ENCODE measurements at regions of chr4 and their contacts with region 1.

Region 1: GRCh38 chr4:152454398-152455011 is 81.4 kb downstream of the FBXW7 start:
- DNase-seq: peak; percentile 27 to 52 (median 51)
- H3K4me3 ChIP-seq: no peak overlapping the region
- H3K27ac ChIP-seq: no peak overlapping the region
- H3K4me1 ChIP-seq: peaks cover 4 to 14% (median 10%) of the 10 kb centered on the region in 4 experiments
- H3K27me3 ChIP-seq: no peaks in the 10 kb centered on the region

Region 2: DNA sequence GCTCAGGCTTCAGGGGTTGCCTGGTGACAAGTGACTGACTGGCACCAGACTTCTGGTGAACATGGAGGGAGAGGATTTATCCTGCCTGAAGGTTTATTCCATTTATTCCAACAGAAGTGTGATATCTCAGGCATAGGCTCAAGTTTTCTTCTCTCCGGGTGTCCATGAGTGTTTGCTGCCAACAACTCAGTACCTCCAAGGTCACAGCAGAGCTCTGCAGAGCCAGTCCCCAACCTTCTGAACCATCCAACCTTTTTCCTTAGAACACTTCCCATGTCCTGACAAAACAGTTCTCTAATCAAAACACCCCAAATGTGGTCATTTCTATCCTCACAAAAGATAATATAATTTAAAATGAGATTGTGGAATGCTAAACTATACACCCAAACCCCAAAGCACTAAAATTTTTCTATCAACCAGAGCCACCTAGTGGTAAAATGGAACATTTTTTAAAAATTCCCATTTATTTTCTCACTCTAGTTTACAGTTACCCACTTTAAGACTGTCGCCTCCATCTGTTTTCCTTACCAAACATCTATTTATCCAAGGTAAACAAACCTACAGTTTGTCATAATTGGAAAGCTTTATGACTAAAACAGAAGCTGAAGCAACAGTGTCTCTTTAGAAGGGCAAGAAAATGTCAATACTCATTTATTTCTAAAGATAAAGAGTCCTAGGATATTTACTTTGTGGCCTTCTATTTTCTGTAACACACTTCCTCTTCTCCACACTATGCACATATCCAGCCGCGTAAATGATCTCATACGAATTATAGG is 185.7 kb after region 1 on chr4:
- CTCF ChIA-PET with region 1: interaction called, 31 read pairs
- POLR2A ChIA-PET with region 1: interaction called, 4 read pairs
- DNase-seq: peak in 2 of 3 donors; percentile 14 to 26
- H3K4me3 ChIP-seq: no peak overlapping the region
- H3K27ac ChIP-seq: no peak overlapping the region
- H3K4me1 ChIP-seq: peaks cover 0 to 13% (median 5%) of the 10 kb centered on the region in 4 experiments
- H3K27me3 ChIP-seq: no peaks in the 10 kb centered on the region

Region 3: GRCh38 chr4:152735396-152735859 is 280.9 kb after region 1 on chr4:
- CTCF ChIA-PET with region 1: interaction called, 16 read pairs
- POLR2A ChIA-PET with region 1: no interaction called
- DNase-seq: peak; percentile 15 to 48 (median 32)
- H3K4me3 ChIP-seq: no peak overlapping the region
- H3K27ac ChIP-seq: no peak overlapping the region
- H3K4me1 ChIP-seq: peaks cover 0 to 3% (median 0%) of the 10 kb centered on the region in 4 experiments
- H3K27me3 ChIP-seq: no peaks in the 10 kb centered on the region

Region 4: DNA sequence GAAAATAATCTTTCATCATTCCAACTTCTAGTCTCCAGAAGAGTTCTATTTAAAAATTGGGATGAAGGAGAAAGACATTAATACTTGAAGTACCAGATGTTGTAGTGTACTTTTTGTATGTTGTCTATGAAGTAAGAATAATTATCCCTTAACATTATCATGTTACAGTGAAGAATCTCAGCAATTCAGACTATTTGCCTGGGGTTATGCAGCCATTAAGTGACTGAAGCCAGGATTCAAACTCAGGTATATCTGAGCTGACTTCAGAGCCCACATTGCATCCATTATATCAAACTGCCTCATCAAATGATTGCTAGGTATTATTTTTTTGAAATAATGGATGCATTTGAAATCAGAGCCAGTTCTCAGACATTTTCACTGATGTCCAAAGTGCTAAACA is 405.5 kb after region 1 on chr4:
- CTCF ChIA-PET with region 1: no interaction called
- POLR2A ChIA-PET with region 1: no interaction called
- DNase-seq: no peak
- H3K4me3 ChIP-seq: no peak overlapping the region
- H3K27ac ChIP-seq: no peak overlapping the region
- H3K4me1 ChIP-seq: no peaks in the 10 kb centered on the region
- H3K27me3 ChIP-seq: no peaks in the 10 kb centered on the region

Measured in common myeloid progenitor, CD34-positive (primary cell).